K562 (cell line): ENCODE measurements at regions of chr12 and their contacts with region 1.

Region 1: DNA sequence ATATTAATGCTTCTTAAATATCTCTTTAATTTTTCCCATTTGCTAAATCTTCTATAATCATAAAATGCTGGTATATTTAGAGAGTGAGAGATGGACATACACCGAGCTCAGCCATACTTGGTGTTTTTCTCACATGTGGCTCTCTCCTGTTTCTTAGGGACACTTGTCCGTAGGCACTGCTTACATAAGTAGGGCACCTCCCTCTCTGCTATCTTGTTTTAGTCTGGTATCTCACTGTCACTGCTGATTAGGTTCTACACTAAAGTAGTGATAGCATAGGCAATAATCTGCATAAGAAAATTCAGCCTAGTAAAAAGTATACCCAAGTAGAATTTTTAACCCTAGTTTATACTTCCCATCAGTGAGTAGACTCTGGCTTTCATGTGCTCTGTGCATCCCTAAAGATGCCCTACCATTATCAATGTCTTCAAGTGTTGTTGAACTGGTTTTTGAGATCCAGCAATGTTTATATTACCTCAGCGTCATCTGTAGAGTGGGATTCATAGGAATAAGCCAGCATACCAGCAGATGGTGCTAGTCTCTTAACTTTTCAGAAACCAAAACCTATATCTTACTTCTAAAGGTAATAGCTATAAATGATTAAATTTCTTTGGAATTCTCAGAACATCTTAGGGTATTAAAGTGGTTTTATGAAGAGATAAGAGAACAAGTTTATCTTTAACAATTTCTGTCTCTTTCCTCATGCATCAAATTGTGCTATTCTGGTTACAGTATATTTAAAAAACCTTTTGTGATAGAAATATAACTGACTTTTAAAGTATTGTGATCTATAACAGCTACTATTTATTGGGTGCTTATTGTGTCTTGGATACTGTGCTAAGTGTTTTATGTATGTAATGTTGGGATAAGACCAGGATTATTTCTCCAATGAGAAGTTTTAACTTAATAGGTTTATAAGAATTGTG is 32.9 kb downstream of the ARID2 start:
- DNase-seq: peak in 3 of 4 experiments; percentile 9 to 55 (median 27)
- ATAC-seq: peak; percentile 88
- H3K4me3 ChIP-seq: no peak overlapping the region
- H3K27ac ChIP-seq: no peak overlapping the region
- H3K4me1 ChIP-seq: peaks cover 0 to 2% of the 10 kb centered on the region in 2 experiments; a peak in 2 of 5 replicates
- H3K27me3 ChIP-seq: no peaks in the 10 kb centered on the region
- CTCF ChIP-seq: peak; percentile 41 to 67 (median 52); a peak in 5 of 6 replicates
- EP300 ChIP-seq: no peak
- POLR2A ChIP-seq: no peak
- RAD21 ChIP-seq: peak; percentile 37 to 62

Region 2: DNA sequence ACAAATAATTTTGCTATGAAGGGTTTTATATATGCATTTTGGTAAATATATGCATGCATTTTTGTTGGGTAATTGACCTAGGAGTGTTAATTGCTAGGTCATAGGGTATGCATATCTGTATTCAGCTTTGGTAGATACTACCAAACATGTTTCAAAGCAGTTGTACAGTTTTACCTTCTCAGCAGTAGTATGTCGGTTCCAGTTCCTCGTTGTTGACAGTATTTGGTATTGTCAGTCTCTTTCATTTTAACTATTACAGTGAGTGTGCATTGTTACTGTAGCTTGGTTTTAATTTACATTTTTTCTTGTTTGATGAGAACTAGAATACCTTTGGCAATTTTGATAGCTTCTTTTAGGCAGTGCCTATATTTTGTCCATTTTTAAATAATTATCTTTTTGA is 66.0 kb after region 1 on chr12:
- CTCF ChIA-PET with region 1: no interaction called
- POLR2A ChIA-PET with region 1: no interaction called
- in situ Hi-C with region 1: no loop called
- intact Hi-C with region 1: no loop called
- DNase-seq: no peak
- ATAC-seq: no peak
- H3K4me3 ChIP-seq: no peak overlapping the region
- H3K27ac ChIP-seq: no peak overlapping the region
- H3K4me1 ChIP-seq: no peaks in the 10 kb centered on the region
- H3K27me3 ChIP-seq: no peaks in the 10 kb centered on the region
- CTCF ChIP-seq: no peak
- EP300 ChIP-seq: no peak
- POLR2A ChIP-seq: no peak
- RAD21 ChIP-seq: no peak

Region 3: DNA sequence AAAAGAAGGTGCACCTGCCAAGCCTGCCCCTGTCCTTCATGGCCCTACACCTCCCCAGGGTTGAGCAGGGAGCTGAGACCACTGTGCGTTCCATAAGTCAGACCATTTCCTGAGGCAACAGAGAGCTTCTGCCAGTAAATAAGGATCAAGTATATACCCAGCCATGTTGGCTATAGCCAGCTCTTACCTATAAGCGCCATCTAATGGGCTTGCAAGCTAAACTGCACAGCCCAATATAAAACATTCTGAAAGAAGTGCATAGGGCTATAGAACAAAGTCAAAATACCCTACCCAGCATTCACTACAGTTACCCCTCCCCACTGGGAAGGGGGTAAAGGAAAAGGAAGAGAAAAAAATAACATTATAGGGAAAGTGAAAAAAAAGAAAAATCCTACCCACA is 287.2 kb after region 1 on chr12:
- CTCF ChIA-PET with region 1: no interaction called
- POLR2A ChIA-PET with region 1: no interaction called
- in situ Hi-C with region 1: no loop called
- intact Hi-C with region 1: loop called (anchors 5 kb)
- DNase-seq: no peak
- ATAC-seq: peak; percentile 55
- H3K4me3 ChIP-seq: no peak overlapping the region
- H3K27ac ChIP-seq: no peak overlapping the region
- H3K4me1 ChIP-seq: no peaks in the 10 kb centered on the region
- H3K27me3 ChIP-seq: no peaks in the 10 kb centered on the region
- CTCF ChIP-seq: peak in 1 of 3 experiments; percentile 16; a peak in 1 of 6 replicates
- EP300 ChIP-seq: no peak
- POLR2A ChIP-seq: no peak
- RAD21 ChIP-seq: peak in 1 of 2 experiments; percentile 43; a peak in 2 of 4 replicates